Activated CD4-positive, alpha-beta memory T cell treated with anti-CD3 and anti-CD28 coated beads, Interleukin-2, amount 10 ng/mL, durations not matched to agents 7 days and 5 days (primary cell): ENCODE measurements at regions of chr15 and their contacts with region 1.

Region 1: GRCh38 chr15:73972984-73973682 is 19.0 kb downstream of the STOML1 start:
- DNase-seq: peak; percentile 86
- H3K4me3 Mint-ChIP-seq: peak overlapping the region; percentile 30
- H3K27ac Mint-ChIP-seq: no peak overlapping the region
- H3K4me1 Mint-ChIP-seq: peaks cover 36% of the 10 kb centered on the region
- H3K27me3 Mint-ChIP-seq: peaks cover 30% of the 10 kb centered on the region

Region 2: DNA sequence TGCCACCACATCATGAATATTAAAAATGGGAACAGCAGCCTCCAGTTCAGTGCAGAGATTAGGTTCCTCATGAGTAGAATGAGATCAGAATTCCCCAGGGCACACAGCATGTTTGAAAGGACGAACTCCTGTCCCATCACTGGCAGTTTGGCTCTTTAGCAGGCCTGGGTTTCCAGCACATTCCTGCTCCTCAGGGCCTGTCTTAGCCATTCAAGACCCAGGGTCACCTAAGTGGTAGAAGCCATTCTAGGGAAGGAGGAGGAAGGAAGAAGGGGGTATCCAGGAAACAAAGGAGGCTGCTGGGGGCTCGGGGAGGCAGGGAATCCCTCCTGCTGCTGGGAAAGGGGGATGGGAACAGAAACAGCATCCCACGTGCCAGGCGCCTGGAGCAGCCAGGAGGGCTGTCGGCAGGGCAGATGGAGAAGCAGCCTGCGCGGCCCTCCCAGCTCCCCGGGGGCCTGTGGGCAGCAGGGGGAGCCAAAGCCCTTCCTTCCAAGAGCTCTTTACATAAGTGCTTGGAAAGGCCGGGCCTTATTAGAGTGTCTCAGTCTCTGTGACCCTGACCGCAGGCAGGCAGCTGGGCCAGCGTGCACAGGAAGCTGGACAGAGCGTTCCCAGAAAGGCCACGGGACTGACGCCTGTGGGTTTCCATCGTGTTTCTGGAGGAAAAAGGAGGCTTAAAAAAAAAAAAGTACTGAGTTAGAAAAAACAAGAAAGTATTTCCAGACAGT is 22.1 kb before region 1 on chr15:
- CTCF ChIA-PET with region 1: interaction called, 28 read pairs
- POLR2A ChIA-PET with region 1: no interaction called
- DNase-seq: peak; percentile 79
- H3K4me3 Mint-ChIP-seq: no peak overlapping the region
- H3K27ac Mint-ChIP-seq: no peak overlapping the region
- H3K4me1 Mint-ChIP-seq: peaks cover 16% of the 10 kb centered on the region
- H3K27me3 Mint-ChIP-seq: no peaks in the 10 kb centered on the region

Region 3: DNA sequence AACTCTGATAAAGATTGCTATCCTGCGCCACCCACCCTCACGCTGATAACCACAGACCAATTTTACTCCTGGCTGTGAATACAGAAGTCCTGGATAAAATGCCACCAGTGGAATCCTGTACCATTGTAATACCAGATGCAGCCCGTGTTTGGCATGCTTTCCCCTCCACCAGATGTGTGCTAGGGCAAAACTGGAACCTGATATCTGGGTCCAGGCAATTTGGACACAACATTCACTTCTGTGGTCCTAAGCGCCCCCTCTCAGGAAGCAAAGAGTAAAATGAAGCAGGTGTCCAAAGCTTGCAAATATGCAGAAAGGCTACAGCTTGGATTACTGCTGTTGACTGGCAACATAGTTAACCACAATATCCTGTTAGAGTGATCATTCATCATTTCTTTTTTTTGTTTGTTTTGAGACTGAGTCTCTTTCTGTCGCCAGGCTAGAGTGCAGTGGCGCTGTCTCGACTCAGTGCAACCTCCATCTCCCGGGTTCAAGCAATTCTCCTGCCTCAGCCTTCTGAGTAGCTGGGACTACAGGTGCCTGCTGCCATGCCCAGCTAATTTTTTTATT is 14.0 kb before region 1 on chr15:
- CTCF ChIA-PET with region 1: interaction called, 39 read pairs
- POLR2A ChIA-PET with region 1: no interaction called
- DNase-seq: peak; percentile 61
- H3K4me3 Mint-ChIP-seq: peak overlapping the region; percentile 30
- H3K27ac Mint-ChIP-seq: peak overlapping the region; percentile 84
- H3K4me1 Mint-ChIP-seq: peaks cover 41% of the 10 kb centered on the region
- H3K27me3 Mint-ChIP-seq: peaks cover 8% of the 10 kb centered on the region

Region 4: GRCh38 chr15:73991726-73992593 is 18.8 kb after region 1 on chr15 and contains the start of gene STOML1:
- CTCF ChIA-PET with region 1: interaction called, 89 read pairs
- POLR2A ChIA-PET with region 1: interaction called, 7 read pairs
- DNase-seq: peak; percentile 95
- H3K4me3 Mint-ChIP-seq: peak within 1 kb of the TSS; percentile 76
- H3K27ac Mint-ChIP-seq: peak within 1 kb of the TSS; percentile 80
- H3K4me1 Mint-ChIP-seq: peaks cover 47% of the 10 kb centered on the region
- H3K27me3 Mint-ChIP-seq: no peaks in the 10 kb centered on the region
- total RNA-seq, gene STOML1: 7.1 to 8.5 TPM

Region 5: GRCh38 chr15:74010929-74011540 is 37.9 kb after region 1 on chr15:
- CTCF ChIA-PET with region 1: interaction called, 15 read pairs
- POLR2A ChIA-PET with region 1: interaction called, 4 read pairs
- DNase-seq: no peak
- H3K4me3 Mint-ChIP-seq: no peak overlapping the region
- H3K27ac Mint-ChIP-seq: no peak overlapping the region
- H3K4me1 Mint-ChIP-seq: peaks cover 60% of the 10 kb centered on the region
- H3K27me3 Mint-ChIP-seq: no peaks in the 10 kb centered on the region

Region 6: GRCh38 chr15:74036271-74037170 is 63.4 kb after region 1 on chr15:
- CTCF ChIA-PET with region 1: interaction called, 20 read pairs
- POLR2A ChIA-PET with region 1: no interaction called
- DNase-seq: no peak
- H3K4me3 Mint-ChIP-seq: no peak overlapping the region
- H3K27ac Mint-ChIP-seq: no peak overlapping the region
- H3K4me1 Mint-ChIP-seq: no peaks in the 10 kb centered on the region
- H3K27me3 Mint-ChIP-seq: no peaks in the 10 kb centered on the region

Region 7: GRCh38 chr15:74053941-74054529 is 80.9 kb after region 1 on chr15:
- CTCF ChIA-PET with region 1: interaction called, 128 read pairs
- POLR2A ChIA-PET with region 1: no interaction called
- DNase-seq: peak; percentile 78
- H3K4me3 Mint-ChIP-seq: no peak overlapping the region
- H3K27ac Mint-ChIP-seq: no peak overlapping the region
- H3K4me1 Mint-ChIP-seq: peaks cover 14% of the 10 kb centered on the region
- H3K27me3 Mint-ChIP-seq: peaks cover 2% of the 10 kb centered on the region